ENCODE measurements at regions of chr2 and their contacts with region 1.

Region 1: DNA sequence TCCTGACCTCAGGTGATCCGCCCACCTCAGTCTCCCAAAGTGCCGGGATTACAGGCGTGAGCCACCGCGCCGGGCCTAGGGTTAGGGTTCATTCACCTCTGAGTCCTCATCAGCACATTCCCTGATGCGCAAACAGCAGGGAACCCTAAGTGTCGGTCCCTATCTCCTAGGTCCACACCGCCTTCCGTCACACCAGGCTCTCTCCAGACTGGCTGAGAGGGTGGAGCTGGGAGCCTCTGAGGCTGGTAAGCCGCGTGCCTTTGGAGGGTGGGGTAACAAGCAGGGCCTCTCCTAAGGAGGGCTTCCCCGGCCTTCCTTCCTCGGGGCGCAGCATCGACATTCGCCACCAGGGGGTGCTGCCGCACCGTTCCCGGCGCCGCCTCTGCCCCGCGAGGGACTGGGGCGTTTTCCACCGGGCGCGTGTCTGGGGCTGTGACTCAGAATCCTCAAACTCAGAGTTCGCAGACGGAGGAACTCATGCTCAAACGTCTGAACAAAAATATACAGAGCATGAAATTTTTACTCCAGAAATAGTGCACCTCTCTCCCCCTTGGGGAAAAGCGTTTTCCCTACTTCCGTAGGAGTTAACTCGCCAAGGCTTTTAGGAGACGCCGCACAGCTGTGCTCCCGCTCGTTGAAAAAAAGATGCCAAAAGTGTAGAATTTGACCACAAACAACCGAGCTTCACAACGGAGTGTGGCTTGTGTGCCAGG is 63.9 kb upstream of the ASAP2 start:
- DNase-seq: peak; percentile 56 to 95
- H3K4me3 ChIP-seq: peak overlapping the region; percentile 2 to 38
- H3K27ac ChIP-seq: peak overlapping the region; percentile 74 to 82
- H3K4me1 ChIP-seq: peaks cover 0 to 14% of the 10 kb centered on the region in 2 donors
- H3K27me3 ChIP-seq: no peaks in the 10 kb centered on the region
- CTCF ChIP-seq: peak; percentile 98 to 99 (median 98)

Region 2: DNA sequence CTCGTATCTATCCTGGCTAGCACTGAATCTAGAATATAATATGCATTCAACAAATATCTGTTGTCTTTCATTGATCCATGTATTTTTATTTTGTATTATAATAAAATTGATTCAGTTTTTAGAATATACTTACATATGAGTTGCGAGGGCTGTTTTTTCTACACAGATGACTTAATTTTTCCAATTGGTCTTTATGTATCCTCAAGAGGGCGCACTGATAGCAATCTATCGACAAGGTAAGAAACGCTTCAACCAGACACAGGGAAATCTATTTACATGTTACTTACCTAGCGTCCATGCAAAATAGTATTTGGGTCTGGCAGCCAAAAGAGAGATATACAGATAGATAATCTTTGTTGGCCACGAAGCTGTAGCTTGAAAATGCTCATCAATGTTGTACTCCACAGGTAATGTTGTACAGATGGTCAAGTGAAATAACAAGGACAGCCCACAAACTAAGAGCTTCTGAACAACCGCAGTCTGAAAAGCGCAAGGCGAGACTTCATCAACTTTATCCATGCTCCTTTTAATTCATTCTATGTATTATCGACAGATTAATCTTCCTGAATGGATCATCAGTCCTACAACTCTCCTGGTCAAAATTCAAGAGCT is 269.8 kb before region 1 on chr2:
- intact Hi-C with region 1: loop called (anchors 1 kb)
- DNase-seq: no peak
- H3K4me3 ChIP-seq: no peak overlapping the region
- H3K27ac ChIP-seq: no peak overlapping the region
- H3K4me1 ChIP-seq: no peaks in the 10 kb centered on the region
- H3K27me3 ChIP-seq: no peaks in the 10 kb centered on the region
- CTCF ChIP-seq: peak; percentile 20 to 54 (median 34)

Region 3: GRCh38 chr2:9165625-9166024 is 22.9 kb after region 1 on chr2:
- intact Hi-C with region 1: loop called (anchors 2 kb)
- DNase-seq: no peak
- H3K4me3 ChIP-seq: no peak overlapping the region
- H3K27ac ChIP-seq: peak overlapping the region; percentile 41 to 81
- H3K4me1 ChIP-seq: peaks cover 13 to 18% of the 10 kb centered on the region in 2 donors
- H3K27me3 ChIP-seq: no peaks in the 10 kb centered on the region
- CTCF ChIP-seq: no peak

Region 4: DNA sequence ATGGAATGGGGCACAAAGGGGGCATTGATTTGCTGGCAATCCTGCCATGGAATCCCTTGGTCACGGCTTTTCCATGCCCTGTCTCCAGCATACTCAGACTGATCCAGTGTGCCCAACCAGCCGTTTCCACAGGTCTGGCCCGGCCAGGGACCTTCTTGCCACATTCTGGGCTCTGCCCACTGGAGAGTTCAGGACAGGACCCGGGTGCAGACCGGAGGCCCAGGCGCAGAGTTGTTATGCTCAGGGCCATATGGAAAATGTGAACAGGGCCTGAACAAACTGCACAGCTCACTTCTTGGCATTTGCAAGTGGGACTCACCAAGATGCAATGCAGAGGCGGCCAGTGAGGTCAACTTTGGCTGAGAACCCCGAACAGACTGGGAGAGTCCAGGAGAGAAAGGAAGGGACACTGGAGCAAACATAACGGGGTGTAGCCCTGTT is 48.4 kb after region 1 on chr2:
- intact Hi-C with region 1: loop called (anchors 1 kb)
- DNase-seq: peak; percentile 84 to 99
- H3K4me3 ChIP-seq: peak overlapping the region in 1 of 2 donors; percentile 10
- H3K27ac ChIP-seq: peak overlapping the region; percentile 85 to 86
- H3K4me1 ChIP-seq: peaks cover 13 to 60% of the 10 kb centered on the region in 2 donors
- H3K27me3 ChIP-seq: no peaks in the 10 kb centered on the region
- CTCF ChIP-seq: no peak

Region 5: DNA sequence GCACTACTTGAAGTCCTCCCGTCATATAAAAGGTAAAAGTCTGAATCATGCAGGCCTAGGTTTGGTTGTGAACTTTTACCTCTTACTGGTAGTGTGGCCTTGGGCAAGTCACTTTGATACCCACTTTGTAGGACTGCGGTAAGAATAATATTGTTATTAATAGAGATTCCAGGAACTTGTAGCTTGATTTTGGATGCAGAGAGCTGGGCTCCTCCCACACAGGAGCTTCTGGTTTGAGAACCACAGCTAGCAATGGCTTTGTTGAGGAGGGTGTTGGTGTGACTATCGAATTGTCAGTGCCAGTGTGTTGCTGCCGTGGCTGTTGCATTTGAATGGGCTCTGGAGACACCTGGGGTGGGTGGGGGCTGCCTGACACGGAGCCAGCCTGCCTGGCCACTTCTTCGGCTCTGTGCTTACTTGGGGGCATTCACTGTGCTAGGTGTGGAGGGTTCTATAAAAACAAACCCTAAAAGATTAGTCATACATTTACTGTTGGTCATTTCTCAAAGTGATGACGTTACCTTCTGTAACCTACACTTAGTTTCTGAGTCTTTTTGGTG is 102.4 kb after region 1 on chr2:
- intact Hi-C with region 1: no loop called
- DNase-seq: no peak
- H3K4me3 ChIP-seq: no peak overlapping the region
- H3K27ac ChIP-seq: no peak overlapping the region
- H3K4me1 ChIP-seq: peaks cover 13 to 59% of the 10 kb centered on the region in 2 donors
- H3K27me3 ChIP-seq: no peaks in the 10 kb centered on the region
- CTCF ChIP-seq: no peak

Region 6: DNA sequence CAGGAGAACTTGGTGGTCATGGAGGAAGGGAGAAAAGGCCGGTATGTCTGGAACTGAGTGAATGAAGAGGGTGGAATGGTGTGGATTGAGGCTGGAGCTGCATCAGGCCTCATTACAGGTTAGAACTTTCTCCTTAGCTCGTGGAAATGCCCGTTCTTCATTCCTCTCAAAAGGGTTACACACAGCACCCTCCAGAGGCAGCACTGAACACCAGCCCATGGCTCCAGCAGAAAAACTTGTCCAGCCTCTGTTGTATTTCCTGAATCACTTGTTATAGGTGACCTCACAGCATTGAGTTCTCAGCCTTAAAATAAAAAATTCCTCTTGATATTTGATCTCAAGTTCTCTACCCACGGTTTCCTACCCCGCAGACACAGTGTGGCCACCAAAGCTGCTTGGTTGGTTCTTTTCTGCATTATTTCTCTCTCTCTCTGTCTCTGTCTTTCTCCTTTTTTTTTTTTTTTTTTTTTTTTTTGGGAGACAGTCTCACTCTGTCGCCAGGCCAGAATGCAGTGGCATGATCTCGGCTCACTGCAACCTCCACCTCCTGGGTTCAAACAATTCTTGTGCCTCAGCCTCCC is 191.0 kb after region 1 on chr2:
- intact Hi-C with region 1: loop called (anchors 1 kb)
- DNase-seq: peak; percentile 26 to 87
- H3K4me3 ChIP-seq: no peak overlapping the region
- H3K27ac ChIP-seq: peak overlapping the region; percentile 58 to 63
- H3K4me1 ChIP-seq: peaks cover 0 to 16% of the 10 kb centered on the region in 2 donors
- H3K27me3 ChIP-seq: no peaks in the 10 kb centered on the region
- CTCF ChIP-seq: peak; percentile 72 to 76 (median 74)